Naive thymus-derived CD8-positive, alpha-beta T cell (primary cell): ENCODE measurements at regions of chr21 and their contacts with region 1.

Region 1: DNA sequence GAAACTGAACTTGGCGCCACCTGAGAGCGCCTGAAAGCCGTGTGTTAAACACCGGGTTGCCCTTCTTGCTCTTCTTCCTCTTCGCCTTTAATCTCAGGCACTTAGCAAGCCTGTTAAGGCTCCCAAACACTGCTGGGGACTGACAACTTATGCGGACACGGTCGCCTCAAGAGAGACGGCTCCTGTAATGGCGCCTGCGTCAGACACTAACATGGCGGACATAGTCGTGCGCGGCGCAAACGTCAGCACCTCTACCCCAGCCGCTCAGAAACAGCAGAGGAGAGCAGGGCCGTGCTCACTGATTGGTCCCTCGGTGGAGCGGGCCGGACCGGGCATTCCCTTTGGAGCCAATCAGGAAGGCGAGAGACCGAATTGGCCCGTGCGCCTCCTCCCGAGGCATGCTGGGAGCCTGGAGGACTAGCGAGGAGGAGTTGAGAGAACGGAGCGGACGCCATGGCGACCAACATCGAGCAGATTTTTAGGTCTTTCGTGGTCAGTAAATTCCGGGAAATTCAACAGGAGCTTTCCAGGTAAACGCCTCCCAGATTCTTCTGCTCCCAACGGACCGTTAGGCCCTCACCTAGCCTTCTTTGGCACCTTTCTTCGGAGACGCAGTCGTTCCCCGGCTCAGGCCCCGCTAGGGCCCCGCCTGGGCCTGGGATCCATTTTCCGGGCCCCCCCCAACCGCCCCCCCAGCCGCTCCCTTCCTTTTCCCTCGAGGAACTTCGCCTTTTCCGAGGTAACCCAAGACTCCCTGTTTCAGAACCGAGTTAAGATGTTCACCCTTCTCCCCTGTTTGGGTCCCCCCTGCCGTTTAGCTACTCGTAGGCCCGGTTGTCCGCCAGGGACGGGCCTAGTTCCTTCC is at the start of gene SON:
- DNase-seq: peak; percentile 92 to 99 (median 98)
- ATAC-seq: peak; percentile 90
- H3K4me3 Mint-ChIP-seq: peak within 1 kb of the TSS; percentile 92 to 100 (median 99)
- H3K27ac Mint-ChIP-seq: peak within 1 kb of the TSS; percentile 99 to 100 (median 100)
- H3K4me1 Mint-ChIP-seq: peaks cover 17 to 56% (median 47%) of the 10 kb centered on the region in 4 donors
- H3K27me3 Mint-ChIP-seq: peaks cover 0 to 2% (median 0%) of the 10 kb centered on the region in 5 donors
- polyA plus RNA-seq, gene SON: 412 to 602 (median 573) TPM

Region 2: GRCh38 chr21:32770871-32771523 is 771.9 kb before region 1 on chr21:
- POLR2A ChIA-PET with region 1: interaction called, 13 read pairs
- DNase-seq: peak in 6 of 10 donors; percentile 25 to 71 (median 38)
- ATAC-seq: peak; percentile 28 to 48
- H3K4me3 Mint-ChIP-seq: peak overlapping the region; percentile 89 to 100 (median 96)
- H3K27ac Mint-ChIP-seq: peak overlapping the region; percentile 91 to 100 (median 94)
- H3K4me1 Mint-ChIP-seq: peaks cover 33 to 67% (median 65%) of the 10 kb centered on the region in 4 donors
- H3K27me3 Mint-ChIP-seq: peaks cover 0 to 4% (median 0%) of the 10 kb centered on the region in 5 donors

Region 3: DNA sequence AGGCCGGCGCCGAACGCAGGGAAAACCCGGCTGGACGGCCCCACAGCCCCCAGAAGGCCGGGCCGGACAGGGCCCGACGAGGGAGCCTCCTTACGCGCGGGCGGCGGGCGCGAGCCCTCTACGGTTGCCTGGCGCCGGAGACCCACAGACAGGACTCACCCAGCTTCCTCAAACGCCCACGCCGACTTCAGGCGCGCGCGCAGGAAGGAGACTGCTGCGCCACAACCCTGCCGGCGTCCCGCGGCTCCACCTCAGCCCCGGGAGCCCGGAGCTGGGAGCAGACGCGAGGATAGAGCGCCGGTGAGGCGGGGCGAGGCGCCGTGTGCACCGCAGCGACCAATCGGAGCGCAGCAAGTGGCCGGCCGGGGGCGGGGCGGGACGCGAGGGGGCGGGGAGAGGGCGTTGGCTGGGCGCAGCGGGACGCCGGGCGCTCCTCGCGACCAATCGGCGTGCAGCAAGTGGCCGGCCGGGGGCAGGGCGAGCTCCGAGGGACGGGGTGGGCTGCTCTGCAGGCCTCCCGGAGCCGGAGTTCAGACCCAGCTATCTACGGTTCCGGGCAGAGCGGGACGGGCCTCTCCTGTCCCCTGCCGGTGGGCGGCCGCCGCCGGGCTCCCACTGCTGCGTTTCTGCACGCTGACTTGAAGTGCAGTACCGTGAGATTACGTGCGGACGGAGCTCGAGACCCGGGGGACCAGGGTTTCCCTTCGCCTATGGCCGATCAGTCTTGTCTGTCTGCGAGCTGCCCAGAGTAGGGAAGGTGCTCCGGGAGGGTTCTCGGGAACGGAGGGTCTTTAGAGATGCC is 63.0 kb before region 1 on chr21 and contains the start of gene TMEM50B:
- POLR2A ChIA-PET with region 1: interaction called, 82 read pairs
- DNase-seq: peak; percentile 89 to 98 (median 94)
- ATAC-seq: peak; percentile 87 to 88
- H3K4me3 Mint-ChIP-seq: peak within 1 kb of the TSS; percentile 81 to 97 (median 94)
- H3K27ac Mint-ChIP-seq: peak within 1 kb of the TSS; percentile 65 to 98 (median 96)
- H3K4me1 Mint-ChIP-seq: peaks cover 11 to 32% (median 24%) of the 10 kb centered on the region in 4 donors
- H3K27me3 Mint-ChIP-seq: no peaks in the 10 kb centered on the region
- polyA plus RNA-seq, gene TMEM50B: 42.3 to 47.9 (median 45.4) TPM

Region 4: DNA sequence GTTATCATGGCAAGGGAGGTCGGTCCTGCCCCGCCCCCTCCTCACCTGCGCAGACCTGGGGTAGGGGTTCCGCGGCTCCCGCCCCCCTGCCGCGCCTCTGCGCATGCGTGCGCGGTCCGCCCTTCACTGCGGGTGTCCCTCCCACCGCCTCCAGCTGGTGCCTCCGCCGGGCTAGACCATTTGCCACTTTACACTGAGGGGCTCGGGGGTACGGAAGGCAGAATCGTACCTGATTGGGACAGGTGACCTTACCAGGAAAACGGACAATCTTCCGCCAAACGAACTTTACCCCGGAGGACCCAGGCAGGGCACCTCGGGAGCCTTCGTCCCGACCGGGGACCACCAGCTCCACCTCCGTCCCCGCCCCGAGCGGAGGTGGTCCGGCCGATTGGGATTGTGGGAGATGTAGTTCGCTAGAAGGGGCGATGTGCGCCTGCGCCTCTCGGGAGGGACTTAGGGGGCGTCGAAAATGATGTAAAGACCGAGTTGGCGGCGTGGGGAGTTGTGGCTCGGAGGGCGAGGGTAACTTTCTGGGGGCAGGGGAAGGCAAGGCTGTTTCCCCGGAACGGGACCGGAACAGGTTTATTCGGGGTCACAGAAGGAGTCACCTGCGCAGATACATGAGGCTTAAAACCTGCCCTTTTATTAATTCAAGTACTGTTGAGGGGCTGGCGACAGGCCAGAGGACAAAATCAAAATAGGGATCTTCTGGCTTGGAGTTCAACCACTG is 51.3 kb before region 1 on chr21 and contains the start of gene DNAJC28:
- POLR2A ChIA-PET with region 1: interaction called, 33 read pairs
- DNase-seq: peak; percentile 93 to 100 (median 96)
- ATAC-seq: peak; percentile 94 to 96
- H3K4me3 Mint-ChIP-seq: peak within 1 kb of the TSS; percentile 85 to 98 (median 91)
- H3K27ac Mint-ChIP-seq: peak within 1 kb of the TSS; percentile 90 to 98 (median 94)
- H3K4me1 Mint-ChIP-seq: peaks cover 5 to 15% (median 10%) of the 10 kb centered on the region in 4 donors
- H3K27me3 Mint-ChIP-seq: no peaks in the 10 kb centered on the region
- polyA plus RNA-seq, gene DNAJC28: 0.89 to 1.8 (median 0.94) TPM

Region 5: DNA sequence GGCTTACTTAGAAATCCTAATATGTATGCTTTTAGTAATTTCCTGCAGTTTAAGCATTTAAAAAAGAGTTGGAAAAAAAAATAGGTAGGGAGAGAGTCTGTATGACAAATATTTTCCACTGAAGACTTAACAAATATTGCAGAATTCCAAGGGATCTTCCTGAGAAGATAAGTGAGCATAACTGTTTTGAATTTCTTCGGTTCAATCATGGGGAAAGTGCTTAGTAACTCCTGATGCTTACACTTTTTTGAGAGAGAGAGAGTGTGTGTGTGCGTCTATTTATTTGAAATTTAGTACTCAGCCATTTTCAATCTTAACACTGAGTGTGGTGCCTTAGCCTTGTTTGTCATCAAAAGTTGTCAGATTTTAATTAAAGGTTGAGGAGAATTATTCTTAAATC is 18.5 kb after region 1 on chr21:
- POLR2A ChIA-PET with region 1: interaction called, 24 read pairs
- DNase-seq: no peak
- ATAC-seq: no peak
- H3K4me3 Mint-ChIP-seq: peak overlapping the region in 1 of 10 donors; percentile 46
- H3K27ac Mint-ChIP-seq: peak overlapping the region in 7 of 10 donors; percentile 1 to 69 (median 32)
- H3K4me1 Mint-ChIP-seq: peaks cover 17 to 63% (median 54%) of the 10 kb centered on the region in 4 donors
- H3K27me3 Mint-ChIP-seq: no peaks in the 10 kb centered on the region

Region 6: GRCh38 chr21:33588485-33589335 is 45.8 kb after region 1 on chr21 and contains the start of gene DONSON:
- POLR2A ChIA-PET with region 1: interaction called, 42 read pairs
- DNase-seq: peak; percentile 74 to 95 (median 88)
- ATAC-seq: peak; percentile 92
- H3K4me3 Mint-ChIP-seq: peak within 1 kb of the TSS; percentile 89 to 97 (median 94)
- H3K27ac Mint-ChIP-seq: peak within 1 kb of the TSS; percentile 59 to 96 (median 92)
- H3K4me1 Mint-ChIP-seq: peaks cover 10 to 16% (median 14%) of the 10 kb centered on the region in 4 donors
- H3K27me3 Mint-ChIP-seq: no peaks in the 10 kb centered on the region
- polyA plus RNA-seq, gene DONSON: 1.9 to 4.7 (median 2.2) TPM